ENCODE measurements at regions of chr21 and their contacts with region 1.

Region 1: GRCh38 chr21:44297525-44298290 is 2.1 kb upstream of the PFKL start:
- DNase-seq: peak; percentile 61
- ATAC-seq: peak; percentile 57
- H3K4me3 ChIP-seq: no peak overlapping the region
- H3K27ac ChIP-seq: peak overlapping the region; percentile 40
- H3K4me1 ChIP-seq: peaks cover 47% of the 10 kb centered on the region
- H3K27me3 ChIP-seq: no peaks in the 10 kb centered on the region
- CTCF ChIP-seq: peak; percentile 77 to 94 (median 84); a peak in 5 of 6 replicates
- EP300 ChIP-seq: no peak
- POLR2A ChIP-seq: no peak
- RAD21 ChIP-seq: peak; percentile 90

Region 2: DNA sequence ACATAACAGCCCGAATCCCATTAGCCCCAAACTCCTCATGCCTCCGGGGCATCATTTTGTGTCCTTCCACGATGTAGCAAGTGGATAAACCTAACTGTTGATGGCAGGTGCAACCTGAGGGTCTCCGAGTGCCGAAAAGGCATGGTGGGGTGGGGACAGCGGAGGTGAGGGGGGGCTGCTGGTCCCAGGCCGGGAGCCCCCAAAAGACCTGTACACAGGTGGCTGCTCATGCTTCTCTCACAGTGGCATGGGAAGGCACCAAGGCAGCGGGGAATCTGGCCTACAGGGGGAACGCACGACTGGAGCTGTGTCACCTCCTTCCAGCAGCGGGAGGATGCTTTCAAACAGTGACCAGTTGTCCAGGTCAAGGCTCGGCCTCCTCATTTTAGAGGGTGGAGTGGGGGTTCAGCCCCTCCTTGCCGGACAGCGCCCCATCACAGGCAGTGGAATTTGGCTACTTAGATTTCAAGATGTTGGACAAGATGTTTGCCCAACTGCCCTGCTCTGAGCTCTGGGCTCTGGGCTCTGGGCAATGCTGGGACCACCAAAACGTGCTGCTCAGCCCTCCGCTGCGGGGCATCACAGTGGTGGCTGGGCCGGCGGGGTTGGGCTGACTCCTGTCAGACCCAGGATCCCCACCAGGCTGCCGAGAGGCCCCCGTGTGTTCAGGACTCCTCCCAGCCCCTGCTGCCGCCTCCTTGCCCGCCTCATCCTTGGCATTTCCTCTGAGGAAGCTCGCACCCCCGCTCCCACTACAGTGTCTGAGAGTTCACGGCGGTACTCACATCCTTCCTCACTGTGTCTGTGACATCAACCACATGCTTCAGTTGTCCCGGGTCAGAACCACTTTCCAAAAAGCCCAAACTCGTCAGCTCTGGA is 43.6 kb before region 1 on chr21:
- CTCF ChIA-PET with region 1: no interaction called
- POLR2A ChIA-PET with region 1: no interaction called
- RAD21 ChIA-PET with region 1: no interaction called
- SMC1A ChIA-PET with region 1: no interaction called
- in situ Hi-C with region 1: no loop called
- intact Hi-C with region 1: no loop called
- DNase-seq: no peak
- ATAC-seq: no peak
- H3K4me3 ChIP-seq: no peak overlapping the region
- H3K27ac ChIP-seq: no peak overlapping the region
- H3K4me1 ChIP-seq: no peaks in the 10 kb centered on the region
- H3K27me3 ChIP-seq: no peaks in the 10 kb centered on the region; a peak in 1 of 4 replicates
- CTCF ChIP-seq: no peak
- EP300 ChIP-seq: no peak
- POLR2A ChIP-seq: no peak
- RAD21 ChIP-seq: no peak

Region 3: GRCh38 chr21:44267655-44268142 is 30.0 kb before region 1 on chr21:
- CTCF ChIA-PET with region 1: interaction called, 15 read pairs
- POLR2A ChIA-PET with region 1: interaction called, 5 read pairs
- RAD21 ChIA-PET with region 1: interaction called, 27 read pairs
- SMC1A ChIA-PET with region 1: interaction called, 11 read pairs
- in situ Hi-C with region 1: no loop called
- intact Hi-C with region 1: no loop called
- DNase-seq: peak; percentile 5
- ATAC-seq: peak; percentile 91
- H3K4me3 ChIP-seq: no peak overlapping the region
- H3K27ac ChIP-seq: no peak overlapping the region
- H3K4me1 ChIP-seq: no peaks in the 10 kb centered on the region
- H3K27me3 ChIP-seq: no peaks in the 10 kb centered on the region
- CTCF ChIP-seq: peak; percentile 27 to 53 (median 31); a peak in 5 of 6 replicates
- EP300 ChIP-seq: no peak
- POLR2A ChIP-seq: no peak
- RAD21 ChIP-seq: peak; percentile 56

Region 4: GRCh38 chr21:44279354-44280260 is 18.1 kb before region 1 on chr21:
- CTCF ChIA-PET with region 1: interaction called, 7 read pairs
- POLR2A ChIA-PET with region 1: interaction called, 3 read pairs
- RAD21 ChIA-PET with region 1: interaction called, 10 read pairs
- SMC1A ChIA-PET with region 1: no interaction called
- in situ Hi-C with region 1: no loop called
- intact Hi-C with region 1: no loop called
- DNase-seq: no peak
- ATAC-seq: no peak
- H3K4me3 ChIP-seq: no peak overlapping the region
- H3K27ac ChIP-seq: no peak overlapping the region
- H3K4me1 ChIP-seq: peaks cover 6% of the 10 kb centered on the region; the same call in 1 of the 2 replicates
- H3K27me3 ChIP-seq: no peaks in the 10 kb centered on the region
- CTCF ChIP-seq: no peak
- EP300 ChIP-seq: no peak
- POLR2A ChIP-seq: no peak
- RAD21 ChIP-seq: no peak

Region 5: GRCh38 chr21:44337941-44338895 is 40.5 kb after region 1 on chr21:
- CTCF ChIA-PET with region 1: interaction called, 3 read pairs
- POLR2A ChIA-PET with region 1: interaction called, 3 read pairs
- RAD21 ChIA-PET with region 1: interaction called, 6 read pairs
- SMC1A ChIA-PET with region 1: interaction called, 4 read pairs
- in situ Hi-C with region 1: no loop called
- intact Hi-C with region 1: loop called (anchors 1 kb)
- DNase-seq: no peak
- ATAC-seq: peak; percentile 25
- H3K4me3 ChIP-seq: peak overlapping the region; percentile 51; the same call in 1 of the 2 replicates
- H3K27ac ChIP-seq: no peak overlapping the region
- H3K4me1 ChIP-seq: peaks cover 11% of the 10 kb centered on the region
- H3K27me3 ChIP-seq: no peaks in the 10 kb centered on the region
- CTCF ChIP-seq: peak; percentile 11 to 42 (median 26); a peak in 3 of 6 replicates
- EP300 ChIP-seq: no peak
- POLR2A ChIP-seq: no peak
- RAD21 ChIP-seq: no peak